AG04449 (cell line): ENCODE measurements at regions of chr6 and their contacts with region 1.

Region 1: DNA sequence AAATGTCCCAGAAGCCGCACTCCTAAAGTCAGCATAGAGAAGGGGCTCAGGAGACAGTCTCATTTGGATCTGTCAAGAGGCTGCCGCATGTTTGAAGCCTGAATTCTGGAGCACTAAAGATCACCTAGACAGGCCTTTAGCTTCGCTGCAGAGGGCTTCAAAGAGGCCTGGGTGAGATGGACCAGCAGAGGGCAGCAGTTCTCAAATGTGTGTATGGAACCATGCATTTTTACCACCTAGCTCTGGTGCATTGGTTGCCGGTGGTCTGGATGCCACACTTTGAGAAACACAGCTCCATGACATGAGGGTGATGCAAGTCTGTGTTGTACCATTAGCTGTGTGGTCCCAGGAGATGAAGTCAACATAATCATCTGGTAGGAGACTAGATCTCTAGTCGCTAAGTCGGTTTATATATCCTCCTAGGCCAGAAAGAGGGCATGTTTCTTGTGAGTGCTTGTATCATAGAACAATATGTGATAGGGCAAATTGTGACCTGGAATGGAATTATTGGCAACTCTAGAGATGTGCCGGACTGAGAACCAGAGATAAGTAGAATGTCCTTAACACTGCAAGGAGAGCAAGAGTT is 64.8 kb downstream of the KIAA0319 start:
- DNase-seq: no peak
- H3K4me3 ChIP-seq: no peak overlapping the region
- CTCF ChIP-seq: peak; percentile 82

Region 2: DNA sequence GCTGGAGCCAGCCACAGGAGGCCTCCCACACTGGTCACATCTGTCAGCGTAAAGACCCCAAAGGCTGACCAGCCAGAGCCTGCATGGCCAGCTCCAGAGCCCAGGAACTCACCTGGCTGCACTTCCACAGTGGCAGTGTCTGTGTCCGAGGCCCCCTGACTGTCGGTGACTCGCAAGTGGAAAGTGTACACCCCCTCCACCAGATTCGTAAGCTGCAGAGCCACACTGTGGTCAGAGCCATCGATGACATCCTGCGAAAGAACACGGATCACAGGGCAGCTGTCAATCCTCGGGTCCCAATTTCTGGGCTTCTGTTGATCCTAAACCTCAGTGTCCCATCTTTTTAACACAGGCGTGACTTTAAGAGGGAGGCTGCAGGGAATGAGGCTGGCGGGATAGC is 17.1 kb before region 1 on chr6:
- CTCF ChIA-PET with region 1: interaction called, 23 read pairs
- POLR2A ChIA-PET with region 1: no interaction called
- DNase-seq: no peak
- H3K4me3 ChIP-seq: no peak overlapping the region
- CTCF ChIP-seq: no peak

Region 3: GRCh38 chr6:24646782-24647181 is 65.6 kb after region 1 on chr6:
- CTCF ChIA-PET with region 1: interaction called, 21 read pairs
- POLR2A ChIA-PET with region 1: no interaction called
- DNase-seq: no peak
- H3K4me3 ChIP-seq: no peak overlapping the region
- CTCF ChIP-seq: no peak

Region 4: DNA sequence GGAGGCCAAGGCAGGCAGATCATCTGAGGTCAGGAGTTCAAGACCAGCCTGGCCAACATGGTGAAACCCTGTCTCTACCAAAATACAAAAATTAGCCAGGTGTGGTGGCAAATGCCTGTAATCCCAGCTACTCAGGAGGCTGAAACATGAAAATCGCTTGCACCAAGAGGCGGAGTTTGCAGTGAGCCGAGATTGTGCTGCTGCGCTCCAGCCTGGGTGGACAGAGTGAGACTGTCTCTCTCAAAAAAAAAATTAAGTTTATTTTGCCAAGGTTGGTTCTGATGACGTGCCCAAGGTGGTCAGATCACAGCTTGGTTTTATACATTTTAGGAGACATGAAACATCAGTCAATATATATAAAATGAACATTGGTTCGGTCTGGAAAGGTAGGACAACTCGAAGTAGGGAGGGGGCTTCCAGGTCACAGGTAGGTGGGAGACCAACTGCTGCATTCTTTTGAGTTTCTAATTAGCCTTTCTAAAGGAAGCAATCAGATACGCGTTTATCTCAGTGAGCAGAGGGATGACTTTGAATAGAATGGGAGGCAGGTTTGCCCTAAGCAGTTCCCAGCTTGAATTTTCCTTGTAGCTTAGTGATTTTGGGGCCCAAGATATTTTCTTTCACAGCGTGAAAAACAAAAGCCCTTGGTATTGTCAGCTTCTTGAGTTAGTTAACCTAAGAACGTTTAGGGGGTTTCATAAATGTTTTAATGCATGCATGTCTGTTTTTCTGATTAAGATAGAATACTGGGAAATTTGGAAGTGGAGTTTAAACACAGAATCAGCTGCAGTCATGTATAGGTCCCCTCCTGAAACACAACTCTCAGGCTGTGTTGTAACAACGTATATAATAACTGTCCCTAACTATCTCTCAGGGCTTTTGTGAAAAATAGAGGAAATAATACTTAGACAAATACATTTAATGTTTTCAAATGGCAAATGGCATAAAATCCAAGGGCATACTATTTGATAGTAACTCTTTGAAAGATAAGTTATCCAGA is 102.4 kb after region 1 on chr6:
- CTCF ChIA-PET with region 1: interaction called, 67 read pairs
- POLR2A ChIA-PET with region 1: no interaction called
- DNase-seq: no peak
- H3K4me3 ChIP-seq: no peak overlapping the region
- CTCF ChIP-seq: no peak

Region 5: DNA sequence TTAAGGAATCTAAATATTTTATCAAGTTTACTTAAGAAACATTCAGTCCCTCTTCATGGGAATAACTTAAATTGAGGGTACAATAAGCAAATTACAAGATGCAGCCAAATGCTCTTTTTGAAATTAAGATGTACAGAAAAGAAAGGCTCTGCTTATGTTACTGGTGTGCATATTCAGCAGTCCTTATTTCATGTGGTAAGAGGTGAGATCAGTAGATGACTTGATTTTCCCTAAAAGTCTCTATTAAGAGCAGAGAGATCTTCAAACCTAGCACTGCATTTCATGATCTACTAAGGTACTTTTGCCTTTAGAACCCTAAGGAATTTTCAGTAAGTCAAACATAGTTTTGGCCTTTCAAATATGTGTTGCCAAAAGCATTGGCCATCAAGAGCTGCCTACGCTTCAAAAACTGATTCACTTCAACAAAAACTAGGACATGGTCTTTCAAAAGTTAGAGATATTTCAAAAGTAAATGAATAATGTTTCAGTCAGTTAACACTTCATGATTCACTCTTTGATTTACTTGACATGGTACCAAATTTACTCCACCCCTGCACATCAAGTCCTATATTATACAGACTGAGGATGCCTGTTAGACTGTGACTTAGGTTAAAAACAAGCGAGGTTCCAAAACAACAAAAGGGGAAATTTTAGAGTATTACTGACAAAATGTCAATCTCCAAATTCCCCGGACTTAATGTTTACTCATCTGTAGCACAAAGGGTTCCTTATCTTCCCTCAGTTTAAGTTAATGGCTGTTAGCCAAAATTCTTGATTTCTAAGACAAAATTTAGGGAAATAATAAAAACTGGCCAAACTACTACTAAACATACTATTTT is 118.6 kb after region 1 on chr6:
- CTCF ChIA-PET with region 1: interaction called, 190 read pairs
- POLR2A ChIA-PET with region 1: no interaction called
- DNase-seq: no peak
- H3K4me3 ChIP-seq: no peak overlapping the region
- CTCF ChIP-seq: no peak

Region 6: GRCh38 chr6:24766680-24767462 is 185.7 kb after region 1 on chr6:
- CTCF ChIA-PET with region 1: interaction called, 85 read pairs
- POLR2A ChIA-PET with region 1: no interaction called
- DNase-seq: no peak
- H3K4me3 ChIP-seq: no peak overlapping the region
- CTCF ChIP-seq: peak; percentile 13